Activated CD8-positive, alpha-beta T cell treated with anti-CD3 and anti-CD28 coated beads, Interleukin-2, amount 10 ng/mL, durations not matched to agents 7 days and 5 days (primary cell): ENCODE measurements at regions of chr16 and their contacts with region 1.

Region 1: GRCh38 chr16:53054670-53055485 is at the start of gene CHD9:
- DNase-seq: peak; percentile 79
- ATAC-seq: peak; percentile 96
- H3K4me3 Mint-ChIP-seq: peak within 1 kb of the TSS; percentile 87
- H3K27ac Mint-ChIP-seq: peak within 1 kb of the TSS; percentile 89
- H3K4me1 Mint-ChIP-seq: peaks cover 54% of the 10 kb centered on the region
- H3K27me3 Mint-ChIP-seq: no peaks in the 10 kb centered on the region
- total RNA-seq, gene CHD9: 23.5 to 32.1 TPM

Region 2: GRCh38 chr16:53099318-53100130 is 44.6 kb after region 1 on chr16:
- CTCF ChIA-PET with region 1: interaction called, 29 read pairs
- POLR2A ChIA-PET with region 1: interaction called, 3 read pairs
- DNase-seq: peak; percentile 65
- ATAC-seq: peak; percentile 80
- H3K4me3 Mint-ChIP-seq: peak overlapping the region; percentile 70
- H3K27ac Mint-ChIP-seq: peak overlapping the region; percentile 91
- H3K4me1 Mint-ChIP-seq: peaks cover 32% of the 10 kb centered on the region
- H3K27me3 Mint-ChIP-seq: no peaks in the 10 kb centered on the region

Region 3: GRCh38 chr16:53154513-53154912 is 99.6 kb after region 1 on chr16:
- CTCF ChIA-PET with region 1: interaction called, 16 read pairs
- POLR2A ChIA-PET with region 1: no interaction called
- DNase-seq: no peak
- ATAC-seq: no peak
- H3K4me3 Mint-ChIP-seq: no peak overlapping the region
- H3K27ac Mint-ChIP-seq: no peak overlapping the region
- H3K4me1 Mint-ChIP-seq: no peaks in the 10 kb centered on the region
- H3K27me3 Mint-ChIP-seq: no peaks in the 10 kb centered on the region

Region 4: DNA sequence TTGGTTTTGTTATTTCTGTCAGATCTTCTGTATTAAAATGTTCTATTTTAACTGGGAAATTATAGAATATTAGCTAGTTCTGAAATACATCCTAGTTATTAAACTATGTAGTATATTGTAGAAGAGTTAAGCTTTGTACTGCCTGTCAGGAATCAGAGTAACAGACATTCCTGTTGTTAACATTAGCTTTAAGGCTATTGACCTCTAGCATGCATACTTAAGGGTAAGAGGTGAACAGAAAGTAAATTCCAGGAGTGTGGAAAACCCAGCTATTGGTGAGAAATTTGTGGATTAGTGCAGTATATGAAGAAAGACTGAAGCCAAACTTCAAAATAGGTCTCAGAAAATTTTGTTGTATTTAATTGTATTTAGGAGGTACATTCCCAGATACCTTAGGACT is 111.2 kb after region 1 on chr16:
- CTCF ChIA-PET with region 1: interaction called, 13 read pairs
- POLR2A ChIA-PET with region 1: no interaction called
- DNase-seq: no peak
- ATAC-seq: no peak
- H3K4me3 Mint-ChIP-seq: no peak overlapping the region
- H3K27ac Mint-ChIP-seq: no peak overlapping the region
- H3K4me1 Mint-ChIP-seq: no peaks in the 10 kb centered on the region
- H3K27me3 Mint-ChIP-seq: no peaks in the 10 kb centered on the region

Region 5: DNA sequence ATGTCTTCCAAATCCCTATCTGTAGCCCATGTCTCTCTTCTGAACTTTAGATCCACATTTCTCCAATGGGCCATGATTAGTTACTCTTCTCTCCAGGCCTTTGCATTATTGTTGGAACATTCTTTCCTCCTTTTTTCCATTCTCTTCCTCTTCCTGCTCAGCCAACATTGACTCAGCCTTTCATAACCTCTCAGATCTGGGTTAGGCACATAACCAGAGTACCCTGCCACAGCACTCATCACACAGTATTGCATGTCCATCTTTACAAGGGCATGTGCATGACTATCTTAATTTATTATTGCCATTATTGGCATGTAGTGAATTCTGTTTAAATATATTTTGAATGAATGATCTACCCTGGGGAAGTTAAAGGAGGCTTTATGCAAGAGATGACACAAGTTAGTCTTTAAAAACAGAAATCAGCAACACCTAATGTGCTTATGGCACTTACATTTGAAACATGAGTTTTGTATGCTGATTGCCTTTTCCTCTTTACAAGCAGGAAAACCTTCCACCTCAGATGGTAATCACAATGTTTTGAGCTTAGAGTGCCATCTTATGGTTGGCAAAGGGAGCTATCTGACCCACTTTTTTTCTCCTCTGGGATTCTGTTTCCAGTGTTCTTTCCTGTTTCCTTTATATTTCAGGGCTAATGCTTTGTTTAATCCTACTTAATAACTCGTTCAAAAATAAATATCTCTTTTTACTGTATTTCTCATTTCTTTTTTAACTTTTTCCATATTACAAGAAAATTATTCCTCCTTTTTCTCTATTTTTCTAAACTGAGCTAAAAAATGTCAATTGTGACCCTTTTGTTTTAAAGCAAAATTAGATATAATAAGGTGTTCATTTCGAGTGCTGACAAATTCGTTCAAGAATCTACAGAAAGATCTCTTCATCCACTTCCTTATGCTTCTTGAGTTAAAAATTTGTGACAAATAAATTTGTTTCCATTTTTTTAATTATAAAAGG is 228.4 kb after region 1 on chr16:
- CTCF ChIA-PET with region 1: interaction called, 29 read pairs
- POLR2A ChIA-PET with region 1: no interaction called
- DNase-seq: no peak
- ATAC-seq: no peak
- H3K4me3 Mint-ChIP-seq: no peak overlapping the region
- H3K27ac Mint-ChIP-seq: no peak overlapping the region
- H3K4me1 Mint-ChIP-seq: peaks cover 4% of the 10 kb centered on the region
- H3K27me3 Mint-ChIP-seq: no peaks in the 10 kb centered on the region